Ascending aorta (tissue), 2 donors: ENCODE measurements at regions of chr21 and their contacts with region 1.

Region 1: DNA sequence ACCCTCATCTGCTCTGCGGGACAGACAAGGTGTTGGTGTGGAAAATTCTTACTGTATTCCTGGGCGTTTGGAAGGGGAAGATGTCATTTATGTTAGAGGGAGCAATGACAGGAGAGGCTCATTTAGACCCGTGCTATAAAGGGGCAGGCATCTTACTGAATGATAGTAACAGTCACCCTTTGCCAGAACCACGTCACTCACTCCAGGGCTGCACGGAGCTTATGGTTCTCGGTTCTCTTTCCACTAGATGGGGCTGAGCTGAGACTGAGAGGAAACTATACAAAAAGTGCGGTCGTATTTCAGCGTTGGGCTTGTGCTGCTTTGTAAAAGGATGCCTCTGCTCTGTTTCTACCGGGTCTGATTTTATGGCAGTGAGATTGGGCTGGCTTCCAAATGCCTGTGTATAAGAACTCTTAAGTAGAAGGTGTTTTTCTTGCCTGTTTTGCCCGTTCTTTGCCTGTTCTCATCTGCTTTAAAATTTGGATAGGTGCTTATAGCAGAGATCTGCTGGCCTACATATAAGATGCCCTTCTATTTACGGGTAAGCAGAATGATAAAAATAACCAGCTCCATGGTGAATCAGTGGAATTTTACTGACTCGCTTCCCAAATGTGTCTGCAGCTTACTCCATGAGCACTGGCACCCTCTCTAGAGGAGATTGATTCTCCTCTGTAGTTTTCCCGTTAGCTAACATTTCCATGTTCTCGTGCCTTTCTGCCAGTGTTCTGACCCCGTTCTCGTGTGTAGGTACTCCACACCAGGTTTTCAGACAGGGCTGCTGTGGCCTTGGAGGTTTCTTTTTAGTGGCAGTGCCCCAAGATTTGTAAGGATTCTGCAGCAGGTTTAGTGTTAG is 55.9 kb downstream of the MRPS6 start:
- DNase-seq: peak in 1 of 2 donors; percentile 85
- H3K4me3 ChIP-seq: peak overlapping the region; percentile 21 to 53
- H3K27ac ChIP-seq: peak overlapping the region; percentile 91 to 92
- H3K4me1 ChIP-seq: peaks cover 44 to 80% of the 10 kb centered on the region in 2 donors
- H3K27me3 ChIP-seq: no peaks in the 10 kb centered on the region
- CTCF ChIP-seq: peak in 2 of 3 experiments; percentile 46 to 51

Region 2: DNA sequence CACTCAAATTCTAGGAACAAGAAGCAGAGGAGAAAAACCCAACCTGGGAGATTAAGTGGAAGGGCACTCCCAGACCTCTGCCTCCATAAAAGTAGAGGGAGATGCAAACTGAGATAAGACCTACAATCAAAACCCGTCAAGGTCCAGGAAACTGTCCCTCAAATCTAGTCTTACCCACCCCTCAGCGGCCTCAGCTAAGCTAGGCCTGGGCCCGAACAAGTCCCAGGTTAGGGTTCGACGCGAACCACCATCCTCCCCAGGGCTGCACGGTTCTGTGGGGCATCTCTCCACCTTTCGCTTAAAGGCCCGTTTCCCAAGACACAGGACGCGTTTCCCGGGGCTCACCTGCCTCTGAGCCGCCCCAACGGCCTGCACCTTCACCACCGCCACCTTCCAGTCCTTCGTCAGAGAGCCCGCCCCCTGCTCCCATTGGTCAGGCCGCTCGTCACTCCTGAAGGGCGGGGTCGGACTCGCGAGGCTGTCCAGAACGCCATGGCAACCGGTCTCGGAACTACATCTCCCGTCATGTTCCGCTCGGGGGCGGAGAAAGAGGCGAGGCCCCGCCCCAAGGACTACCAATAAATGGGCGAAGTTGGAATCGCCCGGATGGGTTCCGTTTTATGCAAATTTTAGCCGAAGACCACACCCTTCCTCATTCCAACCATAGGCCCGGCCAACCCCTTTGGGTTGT is 487.8 kb before region 1 on chr21 and contains the start of gene CRYZL1:
- intact Hi-C with region 1: loop called (anchors 10 kb)
- DNase-seq: peak; percentile 100
- H3K4me3 ChIP-seq: peak within 1 kb of the TSS; percentile 93 to 100
- H3K27ac ChIP-seq: peak within 1 kb of the TSS; percentile 84 to 95
- H3K4me1 ChIP-seq: peaks cover 5 to 20% of the 10 kb centered on the region in 2 donors
- H3K27me3 ChIP-seq: no peaks in the 10 kb centered on the region
- CTCF ChIP-seq: no peak
- total RNA-seq, gene CRYZL1: 20.0 TPM

Region 3: GRCh38 chr21:33968080-33968994 is 160.9 kb before region 1 on chr21:
- intact Hi-C with region 1: loop called (anchors 2 kb)
- DNase-seq: peak in 1 of 2 donors; percentile 83
- H3K4me3 ChIP-seq: peak overlapping the region; percentile 11 to 27
- H3K27ac ChIP-seq: peak overlapping the region; percentile 81 to 83
- H3K4me1 ChIP-seq: peaks cover 3 to 21% of the 10 kb centered on the region in 2 donors
- H3K27me3 ChIP-seq: no peaks in the 10 kb centered on the region
- CTCF ChIP-seq: no peak

Region 4: DNA sequence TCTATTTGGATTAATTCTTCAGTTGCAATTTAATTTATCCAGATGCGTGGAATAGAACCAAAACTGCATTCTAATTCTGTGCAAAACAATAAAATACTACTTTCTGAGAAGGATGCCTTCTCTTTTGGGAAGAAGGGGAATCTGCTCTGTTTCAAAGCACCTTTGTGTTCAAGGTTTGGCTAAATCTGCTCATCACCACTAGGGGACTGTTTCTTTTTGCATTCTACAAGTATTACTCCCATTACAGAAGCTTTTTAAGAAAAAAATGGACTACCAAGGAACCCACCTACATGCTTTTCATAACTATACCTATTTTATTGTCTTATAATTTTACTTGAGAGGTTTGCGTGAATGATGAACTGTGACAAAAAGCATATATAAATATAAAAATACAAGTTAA is 37.7 kb before region 1 on chr21:
- intact Hi-C with region 1: loop called (anchors 5 kb)
- DNase-seq: no peak
- H3K4me3 ChIP-seq: no peak overlapping the region
- H3K27ac ChIP-seq: no peak overlapping the region
- H3K4me1 ChIP-seq: peaks cover 4 to 38% of the 10 kb centered on the region in 2 donors
- H3K27me3 ChIP-seq: no peaks in the 10 kb centered on the region
- CTCF ChIP-seq: peak in 1 of 3 experiments; percentile 12

Region 5: DNA sequence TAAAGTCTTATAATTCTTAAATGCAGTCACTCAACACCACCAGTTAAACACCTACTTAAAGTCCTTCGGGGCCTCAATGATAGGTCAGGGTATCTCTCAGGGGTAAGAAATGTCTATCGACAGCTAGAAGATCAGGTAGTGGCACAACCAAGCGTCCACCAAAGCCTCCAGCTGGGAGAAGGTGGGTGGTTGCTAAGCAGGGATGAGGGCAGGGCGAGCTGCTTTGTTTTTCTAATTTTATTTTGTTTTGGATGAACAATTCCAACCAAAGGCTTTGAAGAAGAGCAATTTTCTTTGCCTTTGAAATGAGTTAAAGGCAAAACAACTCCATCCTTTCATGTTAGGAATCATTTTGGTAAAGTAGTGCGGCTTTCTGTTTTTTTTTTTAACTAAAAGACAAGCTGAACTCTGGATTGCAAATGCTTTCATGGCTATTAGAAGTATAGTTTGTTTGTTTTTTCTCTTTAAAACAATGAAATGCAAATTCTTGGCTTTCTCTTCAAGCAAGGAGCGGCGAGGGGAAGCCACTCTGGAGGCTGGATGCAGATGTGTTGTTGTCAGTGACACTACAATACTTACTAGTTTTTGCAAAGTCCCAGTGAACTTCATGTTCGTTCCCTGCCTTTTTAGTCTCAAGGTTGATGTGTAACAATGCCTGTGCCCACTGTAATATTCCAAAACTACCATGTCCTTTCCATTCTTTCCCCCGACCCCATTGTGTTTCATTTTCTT is 50.1 kb after region 1 on chr21:
- intact Hi-C with region 1: loop called (anchors 2 kb)
- DNase-seq: peak in 1 of 2 donors; percentile 9
- H3K4me3 ChIP-seq: peak overlapping the region; percentile 30 to 53
- H3K27ac ChIP-seq: peak overlapping the region; percentile 75 to 84
- H3K4me1 ChIP-seq: peaks cover 0 to 23% of the 10 kb centered on the region in 2 donors
- H3K27me3 ChIP-seq: no peaks in the 10 kb centered on the region
- CTCF ChIP-seq: no peak

Region 6: GRCh38 chr21:34345091-34345871 is 216.0 kb after region 1 on chr21:
- intact Hi-C with region 1: loop called (anchors 2 kb)
- DNase-seq: no peak
- H3K4me3 ChIP-seq: no peak overlapping the region
- H3K27ac ChIP-seq: peak overlapping the region; percentile 66 to 70
- H3K4me1 ChIP-seq: peaks cover 3 to 21% of the 10 kb centered on the region in 2 donors
- H3K27me3 ChIP-seq: no peaks in the 10 kb centered on the region
- CTCF ChIP-seq: no peak

Region 7: DNA sequence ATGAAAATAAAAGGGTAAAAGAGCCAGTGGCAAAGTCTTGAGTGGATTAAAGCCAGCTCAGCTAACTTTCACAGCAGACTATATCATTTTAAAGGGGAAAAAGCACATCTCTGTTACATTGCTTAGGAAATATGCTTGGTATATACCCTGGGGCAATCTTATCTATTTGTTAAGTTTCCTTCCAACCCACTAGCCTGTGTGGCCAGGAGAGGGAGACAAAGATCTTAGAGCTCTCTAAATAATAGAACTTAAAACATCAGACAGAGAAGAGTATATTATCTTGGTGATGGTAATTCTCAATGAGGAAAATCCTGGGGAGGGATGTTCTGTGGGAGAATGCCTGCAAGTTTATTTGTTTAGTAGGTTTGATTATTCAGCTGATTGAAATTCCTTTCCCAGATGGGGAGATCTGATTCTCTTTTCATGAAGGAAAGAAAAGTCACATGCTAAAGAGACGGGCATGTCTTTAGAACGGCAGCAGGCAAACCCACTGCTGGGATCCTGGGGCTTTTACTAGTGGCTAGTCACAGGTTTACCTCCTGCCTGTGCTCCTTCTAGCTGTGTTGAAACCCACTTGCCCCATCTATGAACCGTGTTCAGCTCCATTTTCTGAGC is 238.2 kb after region 1 on chr21:
- intact Hi-C with region 1: no loop called
- DNase-seq: peak in 1 of 2 donors; percentile 65
- H3K4me3 ChIP-seq: no peak overlapping the region
- H3K27ac ChIP-seq: no peak overlapping the region
- H3K4me1 ChIP-seq: no peaks in the 10 kb centered on the region
- H3K27me3 ChIP-seq: no peaks in the 10 kb centered on the region
- CTCF ChIP-seq: peak in 2 of 3 experiments; percentile 59 to 66